SK-N-SH (cell line): ENCODE measurements at regions of chr7 and their contacts with region 1.

Region 1: GRCh38 chr7:43454936-43455518 is 127.9 kb upstream of the STK17A start:
- DNase-seq: peak; percentile 70
- H3K4me3 ChIP-seq: no peak overlapping the region; a peak in 1 of 4 replicates
- H3K27ac ChIP-seq: no peak overlapping the region
- H3K4me1 ChIP-seq: peaks cover 0 to 2% of the 10 kb centered on the region in 2 experiments; a peak in 1 of 4 replicates
- H3K27me3 ChIP-seq: peaks cover 4% of the 10 kb centered on the region; the same call in 1 of the 2 replicates
- CTCF ChIP-seq: peak; percentile 70
- EP300 ChIP-seq: no peak
- RAD21 ChIP-seq: peak; percentile 76

Region 2: DNA sequence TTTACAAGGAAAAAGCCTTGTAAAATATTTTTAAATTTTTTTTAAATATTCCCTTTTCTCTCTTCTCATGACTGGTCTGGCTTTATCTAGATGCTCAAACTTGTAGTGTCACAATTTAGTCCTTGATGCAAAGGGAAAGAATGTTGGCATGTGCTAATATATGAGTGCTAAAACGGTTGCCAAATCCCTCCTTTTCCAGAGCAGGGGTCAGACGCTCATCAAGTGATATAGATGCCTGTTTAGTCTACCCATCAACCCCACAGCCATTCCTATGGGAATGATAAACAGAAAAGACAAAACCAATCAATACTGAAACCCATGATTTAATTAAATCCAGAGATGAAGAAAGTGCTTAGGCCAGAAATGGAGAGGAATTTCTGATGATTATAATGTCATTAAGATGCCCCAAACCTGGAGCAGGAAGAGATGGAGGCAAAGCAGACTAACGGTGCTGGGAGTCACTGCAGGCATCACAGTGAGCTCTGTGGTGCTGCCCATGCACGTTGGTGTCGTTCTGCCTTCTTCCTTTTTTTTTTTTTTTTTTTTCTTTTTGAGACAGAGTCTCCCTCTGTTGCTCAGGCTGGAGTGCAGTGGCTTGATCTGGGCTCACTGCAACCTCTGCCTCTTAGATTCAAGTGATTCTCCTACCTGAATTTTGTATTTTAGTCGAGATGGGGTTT is 82.2 kb before region 1 on chr7:
- CTCF ChIA-PET with region 1: no interaction called
- POLR2A ChIA-PET with region 1: no interaction called
- DNase-seq: peak; percentile 40
- H3K4me3 ChIP-seq: no peak overlapping the region
- H3K27ac ChIP-seq: no peak overlapping the region
- H3K4me1 ChIP-seq: no peaks in the 10 kb centered on the region; a peak in 1 of 4 replicates
- H3K27me3 ChIP-seq: 0 out of 2 replicates have a peak, but pooled peaks cover 6% of the 10 kb centered on the region
- CTCF ChIP-seq: no peak
- EP300 ChIP-seq: no peak
- RAD21 ChIP-seq: no peak

Region 3: GRCh38 chr7:43439631-43440401 is 15.2 kb before region 1 on chr7:
- CTCF ChIA-PET with region 1: interaction called, 79 read pairs
- POLR2A ChIA-PET with region 1: no interaction called
- DNase-seq: peak; percentile 76
- H3K4me3 ChIP-seq: no peak overlapping the region
- H3K27ac ChIP-seq: no peak overlapping the region
- H3K4me1 ChIP-seq: peaks cover 0 to 5% of the 10 kb centered on the region in 2 experiments; a peak in 2 of 4 replicates
- H3K27me3 ChIP-seq: no peaks in the 10 kb centered on the region; the same call in 1 of the 2 replicates
- CTCF ChIP-seq: peak; percentile 89
- EP300 ChIP-seq: no peak
- RAD21 ChIP-seq: peak; percentile 56

Region 4: GRCh38 chr7:43465581-43466554 is 10.8 kb after region 1 on chr7:
- CTCF ChIA-PET with region 1: interaction called, 19 read pairs
- POLR2A ChIA-PET with region 1: no interaction called
- DNase-seq: peak; percentile 51
- H3K4me3 ChIP-seq: no peak overlapping the region
- H3K27ac ChIP-seq: no peak overlapping the region
- H3K4me1 ChIP-seq: peaks cover 0 to 3% of the 10 kb centered on the region in 2 experiments; a peak in 1 of 4 replicates
- H3K27me3 ChIP-seq: peaks cover 30% of the 10 kb centered on the region; the same call in 1 of the 2 replicates
- CTCF ChIP-seq: no peak
- EP300 ChIP-seq: no peak
- RAD21 ChIP-seq: no peak

Region 5: GRCh38 chr7:43479042-43479441 is 24.0 kb after region 1 on chr7:
- CTCF ChIA-PET with region 1: interaction called, 18 read pairs
- POLR2A ChIA-PET with region 1: no interaction called
- DNase-seq: no peak
- H3K4me3 ChIP-seq: no peak overlapping the region
- H3K27ac ChIP-seq: no peak overlapping the region
- H3K4me1 ChIP-seq: no peaks in the 10 kb centered on the region; a peak in 1 of 4 replicates
- H3K27me3 ChIP-seq: no peaks in the 10 kb centered on the region
- CTCF ChIP-seq: peak; percentile 19; the same call in 1 of the 2 replicates
- EP300 ChIP-seq: no peak
- RAD21 ChIP-seq: peak; percentile 21; the same call in 1 of the 2 replicates

Region 6: GRCh38 chr7:43647673-43648472 is 192.8 kb after region 1 on chr7:
- CTCF ChIA-PET with region 1: no interaction called
- POLR2A ChIA-PET with region 1: no interaction called
- DNase-seq: peak; percentile 59
- H3K4me3 ChIP-seq: peak overlapping the region; percentile 20 to 44; a peak in 3 of 4 replicates
- H3K27ac ChIP-seq: peak overlapping the region; percentile 98 to 100
- H3K4me1 ChIP-seq: peaks cover 65 to 68% of the 10 kb centered on the region in 2 experiments
- H3K27me3 ChIP-seq: no peaks in the 10 kb centered on the region
- CTCF ChIP-seq: no peak
- EP300 ChIP-seq: peak; percentile 96 to 100
- RAD21 ChIP-seq: no peak